Left lung (tissue), 14 donors: ENCODE measurements at regions of chr1 and their contacts with region 1.

Region 1: GRCh38 chr1:204363335-204364124 is 3.8 kb upstream of the PLEKHA6 start:
- DNase-seq: peak; percentile 67 to 85 (median 80)
- ATAC-seq: peak; percentile 96
- H3K4me3 ChIP-seq: peak overlapping the region; percentile 22 to 42
- H3K27ac ChIP-seq: peak overlapping the region; percentile 5 to 30
- H3K4me1 ChIP-seq: peaks cover 0 to 14% of the 10 kb centered on the region in 2 donors
- H3K27me3 ChIP-seq: peaks cover 0 to 19% of the 10 kb centered on the region in 2 donors
- CTCF ChIP-seq: peak; percentile 96

Region 2: DNA sequence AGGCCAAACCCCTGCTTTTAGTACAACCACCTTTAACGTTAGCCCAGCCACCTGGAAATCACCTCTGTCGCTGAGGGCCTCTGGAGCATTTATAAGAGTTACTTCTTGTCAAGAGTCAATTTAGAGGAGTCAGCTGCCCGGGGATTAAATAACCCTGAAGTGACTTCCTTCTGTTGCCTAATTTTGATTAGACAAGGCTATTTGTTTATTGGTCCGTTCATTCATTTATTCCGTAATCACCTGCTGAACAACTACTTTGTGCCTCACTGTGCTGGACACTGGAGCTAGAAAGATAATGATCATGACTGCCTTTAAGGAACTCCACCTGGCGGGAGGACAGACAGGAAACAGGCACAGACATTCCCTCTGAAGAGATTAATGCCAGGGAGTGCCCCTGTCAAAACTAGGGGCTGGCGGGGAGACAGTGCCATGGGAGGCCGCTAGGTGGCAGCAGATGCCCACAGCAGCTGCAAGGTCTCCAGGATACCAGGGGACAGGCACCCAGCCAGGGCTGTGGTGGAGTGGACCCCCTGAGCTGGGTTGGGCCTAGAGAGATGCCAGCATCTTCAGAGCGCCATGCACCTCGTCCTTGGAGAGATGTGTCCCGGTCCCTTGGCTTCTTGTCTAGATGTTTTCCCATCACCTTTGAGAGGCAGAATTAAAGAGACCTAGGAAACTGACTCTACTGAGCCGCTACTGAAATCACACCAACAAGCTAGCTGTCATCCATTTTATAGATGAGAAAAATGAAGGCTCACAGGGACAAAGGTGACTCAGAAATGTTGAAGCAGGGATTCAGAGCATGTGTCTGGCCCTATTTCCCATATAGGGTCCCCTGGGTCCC is 201.1 kb before region 1 on chr1:
- intact Hi-C with region 1: loop called in 1 of 2 experiments (anchors 5 kb)
- DNase-seq: peak; percentile 69 to 94 (median 82)
- ATAC-seq: peak; percentile 96
- H3K4me3 ChIP-seq: no peak overlapping the region
- H3K27ac ChIP-seq: no peak overlapping the region
- H3K4me1 ChIP-seq: peaks cover 0 to 6% of the 10 kb centered on the region in 2 donors
- H3K27me3 ChIP-seq: no peaks in the 10 kb centered on the region
- CTCF ChIP-seq: peak; percentile 98 to 99

Region 3: DNA sequence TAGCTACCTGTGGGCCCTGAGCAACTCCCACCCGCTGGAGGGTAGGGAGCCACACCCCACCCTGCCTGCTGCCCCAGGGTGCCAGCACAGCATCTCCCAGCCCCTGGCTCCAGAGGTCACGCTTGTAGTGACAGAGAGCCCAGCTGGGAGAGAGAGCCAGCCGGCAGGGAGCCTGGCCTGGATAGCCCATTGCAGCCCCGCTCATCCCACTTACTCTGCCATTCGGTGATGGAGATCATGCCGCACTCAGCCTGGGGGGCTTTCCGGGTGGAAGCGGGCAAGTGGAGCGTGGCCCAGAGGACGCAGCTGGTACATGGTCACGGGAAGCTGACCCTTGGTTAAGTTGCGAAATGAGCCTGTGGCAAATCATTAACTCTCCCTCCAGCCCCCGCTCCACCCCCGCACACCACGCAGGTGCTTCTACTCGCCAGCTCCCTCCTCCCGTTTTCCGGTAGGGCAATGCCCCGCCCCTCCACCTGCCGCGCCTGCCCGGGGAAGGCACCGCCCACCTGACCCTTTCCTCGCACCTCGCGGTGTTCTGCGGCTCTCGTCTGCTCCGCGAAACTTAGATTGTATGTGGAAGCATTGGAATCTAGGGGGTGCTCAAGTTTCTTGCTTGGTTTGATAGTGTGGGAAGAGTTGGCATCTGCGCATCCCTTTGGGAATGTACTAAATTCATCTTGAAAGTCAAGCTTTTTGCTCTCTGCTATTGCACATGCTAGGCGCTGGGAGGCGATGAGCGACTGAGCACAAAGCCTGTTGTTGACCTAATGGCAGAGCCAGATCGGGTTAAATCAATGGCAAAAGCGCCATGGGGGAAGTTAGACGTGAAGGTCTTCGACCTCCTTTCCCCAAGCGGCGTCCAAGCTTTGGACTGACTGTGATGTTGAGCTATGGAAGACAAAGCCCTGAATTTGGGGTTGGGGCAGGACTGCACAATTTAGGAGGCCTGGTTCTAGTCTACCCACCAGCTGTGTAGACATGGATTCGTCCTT is 149.6 kb before region 1 on chr1 and contains the start of gene GOLT1A:
- intact Hi-C with region 1: loop called in 1 of 2 experiments (anchors 5 kb)
- DNase-seq: peak; percentile 37 to 90 (median 76)
- ATAC-seq: peak; percentile 98
- H3K4me3 ChIP-seq: peak within 1 kb of the TSS; percentile 19 to 38
- H3K27ac ChIP-seq: no peak within 1 kb of the TSS
- H3K4me1 ChIP-seq: peaks cover 7% of the 10 kb centered on the region in 2 donors
- H3K27me3 ChIP-seq: peaks cover 0 to 10% of the 10 kb centered on the region in 2 donors
- CTCF ChIP-seq: peak; percentile 45 to 47
- polyA plus RNA-seq, gene GOLT1A: 4.4 to 10.2 (median 8.8) TPM

Region 4: GRCh38 chr1:204465546-204466415 is 102.3 kb after region 1 on chr1:
- intact Hi-C with region 1: no loop called
- DNase-seq: no peak
- ATAC-seq: peak; percentile 31
- H3K4me3 ChIP-seq: no peak overlapping the region
- H3K27ac ChIP-seq: peak overlapping the region in 1 of 2 donors; percentile 73
- H3K4me1 ChIP-seq: peaks cover 0 to 45% of the 10 kb centered on the region in 2 donors
- H3K27me3 ChIP-seq: no peaks in the 10 kb centered on the region
- CTCF ChIP-seq: no peak

Region 5: GRCh38 chr1:204726478-204726877 is 362.9 kb after region 1 on chr1:
- intact Hi-C with region 1: no loop called
- DNase-seq: no peak
- ATAC-seq: peak; percentile 63
- H3K4me3 ChIP-seq: no peak overlapping the region
- H3K27ac ChIP-seq: no peak overlapping the region
- H3K4me1 ChIP-seq: no peaks in the 10 kb centered on the region
- H3K27me3 ChIP-seq: peaks cover 0 to 44% of the 10 kb centered on the region in 2 donors
- CTCF ChIP-seq: no peak